Activated naive CD4-positive, alpha-beta T cell treated with anti-CD3 and anti-CD28 coated beads for 36 hours (primary cell): ENCODE measurements at regions of chr14 and their contacts with region 1.

Region 1: DNA sequence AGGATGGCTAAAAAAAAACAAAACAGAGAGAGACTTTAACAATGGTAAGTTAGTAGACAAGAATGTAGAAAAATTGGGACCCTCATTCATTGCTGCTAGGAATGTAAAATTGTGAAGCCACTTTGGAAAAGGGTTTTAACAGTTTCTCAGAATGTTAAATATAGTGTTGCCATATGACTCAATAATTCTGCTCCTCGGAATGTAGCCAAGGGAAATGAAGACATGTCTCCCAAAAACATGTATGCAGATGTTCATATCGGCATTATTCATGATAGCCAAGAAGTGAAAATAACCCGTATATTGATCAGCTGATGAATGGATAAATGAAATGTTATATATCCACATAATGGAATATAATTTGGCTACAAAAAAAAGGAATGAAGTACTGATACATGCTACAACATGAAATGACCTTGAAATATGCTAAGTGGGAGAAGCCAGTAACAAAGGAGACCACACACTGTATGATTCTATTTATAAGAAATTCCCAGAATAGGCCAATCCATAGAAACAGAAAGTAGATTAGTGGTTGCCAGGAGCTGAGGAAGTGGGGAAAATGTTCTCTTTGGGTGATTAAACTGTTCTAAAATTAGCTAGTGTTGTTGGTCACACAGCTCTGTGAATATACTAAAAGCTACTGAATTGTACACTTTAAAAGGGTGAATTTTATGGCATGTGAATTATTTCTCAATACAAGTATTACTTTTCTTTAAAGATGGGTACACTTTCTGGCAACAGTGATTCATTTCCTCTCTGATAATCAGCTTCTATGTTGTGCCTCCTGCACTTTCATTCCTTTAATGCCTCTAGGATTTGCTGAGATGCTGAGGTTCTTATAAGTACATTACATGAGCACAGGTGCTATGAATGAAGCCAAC is 132.5 kb downstream of the DAAM1 start:
- DNase-seq: no peak
- H3K4me3 Mint-ChIP-seq: no peak overlapping the region
- H3K27ac Mint-ChIP-seq: no peak overlapping the region
- H3K4me1 Mint-ChIP-seq: peaks cover 8% of the 10 kb centered on the region
- H3K27me3 Mint-ChIP-seq: no peaks in the 10 kb centered on the region

Region 2: GRCh38 chr14:59275653-59276052 is 45.3 kb before region 1 on chr14:
- CTCF ChIA-PET with region 1: no interaction called
- intact Hi-C with region 1: loop called (anchors 5 kb)
- DNase-seq: no peak
- H3K4me3 Mint-ChIP-seq: no peak overlapping the region
- H3K27ac Mint-ChIP-seq: no peak overlapping the region
- H3K4me1 Mint-ChIP-seq: peaks cover 19% of the 10 kb centered on the region
- H3K27me3 Mint-ChIP-seq: no peaks in the 10 kb centered on the region